Activated CD8-positive, alpha-beta T cell treated with anti-CD3 and anti-CD28 coated beads, Interleukin-2, amount 10 ng/mL, durations not matched to agents 7 days and 5 days (primary cell): ENCODE measurements at regions of chr12 and their contacts with region 1.

Region 1: DNA sequence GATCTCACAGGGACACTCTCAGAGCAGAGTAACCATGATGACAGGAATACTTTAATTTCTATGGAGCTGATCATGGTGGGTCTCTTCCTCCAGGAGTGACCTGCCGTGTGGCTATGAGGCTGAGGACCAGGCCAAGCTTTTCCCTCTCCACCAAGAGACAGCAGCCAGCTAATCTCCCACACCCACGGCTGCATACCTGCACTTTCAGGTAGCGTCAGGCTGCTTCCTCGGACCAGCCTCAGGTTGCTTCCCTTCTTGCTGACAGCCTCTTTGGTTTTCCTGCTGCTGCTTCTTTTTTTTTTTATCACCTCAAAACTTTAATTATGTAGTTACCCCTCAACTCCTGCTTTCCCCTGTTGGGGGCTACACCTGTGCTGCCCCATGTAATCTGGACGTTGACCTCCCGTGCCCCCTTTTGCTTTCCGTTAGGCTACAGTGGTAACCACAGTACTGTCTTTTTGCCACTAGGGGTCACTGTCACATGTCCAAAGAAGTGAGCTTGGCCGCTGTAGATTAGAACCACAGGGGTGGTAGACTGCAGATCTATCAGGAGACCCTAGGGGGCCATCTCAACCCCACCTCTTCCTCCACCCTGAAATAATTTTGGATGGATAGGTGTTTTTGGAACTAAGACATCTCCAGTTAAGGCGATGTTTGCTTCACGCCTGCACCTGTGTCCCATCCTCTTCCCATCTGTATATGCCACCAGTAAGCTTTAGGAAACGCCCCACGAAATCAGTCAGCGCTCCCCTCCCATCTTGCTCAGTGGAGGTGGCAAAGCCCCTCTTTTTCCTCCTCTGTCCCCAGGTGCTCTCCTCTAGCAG is 7.8 kb upstream of the PIP4K2C start:
- DNase-seq: peak; percentile 84
- ATAC-seq: peak; percentile 99
- H3K4me3 Mint-ChIP-seq: no peak overlapping the region
- H3K27ac Mint-ChIP-seq: no peak overlapping the region
- H3K4me1 Mint-ChIP-seq: peaks cover 6% of the 10 kb centered on the region
- H3K27me3 Mint-ChIP-seq: no peaks in the 10 kb centered on the region

Region 2: GRCh38 chr12:57552835-57553313 is 30.3 kb before region 1 on chr12:
- CTCF ChIA-PET with region 1: interaction called, 10 read pairs
- POLR2A ChIA-PET with region 1: no interaction called
- DNase-seq: no peak
- ATAC-seq: no peak
- H3K4me3 Mint-ChIP-seq: no peak overlapping the region
- H3K27ac Mint-ChIP-seq: no peak overlapping the region
- H3K4me1 Mint-ChIP-seq: peaks cover 18% of the 10 kb centered on the region
- H3K27me3 Mint-ChIP-seq: peaks cover 15% of the 10 kb centered on the region

Region 3: DNA sequence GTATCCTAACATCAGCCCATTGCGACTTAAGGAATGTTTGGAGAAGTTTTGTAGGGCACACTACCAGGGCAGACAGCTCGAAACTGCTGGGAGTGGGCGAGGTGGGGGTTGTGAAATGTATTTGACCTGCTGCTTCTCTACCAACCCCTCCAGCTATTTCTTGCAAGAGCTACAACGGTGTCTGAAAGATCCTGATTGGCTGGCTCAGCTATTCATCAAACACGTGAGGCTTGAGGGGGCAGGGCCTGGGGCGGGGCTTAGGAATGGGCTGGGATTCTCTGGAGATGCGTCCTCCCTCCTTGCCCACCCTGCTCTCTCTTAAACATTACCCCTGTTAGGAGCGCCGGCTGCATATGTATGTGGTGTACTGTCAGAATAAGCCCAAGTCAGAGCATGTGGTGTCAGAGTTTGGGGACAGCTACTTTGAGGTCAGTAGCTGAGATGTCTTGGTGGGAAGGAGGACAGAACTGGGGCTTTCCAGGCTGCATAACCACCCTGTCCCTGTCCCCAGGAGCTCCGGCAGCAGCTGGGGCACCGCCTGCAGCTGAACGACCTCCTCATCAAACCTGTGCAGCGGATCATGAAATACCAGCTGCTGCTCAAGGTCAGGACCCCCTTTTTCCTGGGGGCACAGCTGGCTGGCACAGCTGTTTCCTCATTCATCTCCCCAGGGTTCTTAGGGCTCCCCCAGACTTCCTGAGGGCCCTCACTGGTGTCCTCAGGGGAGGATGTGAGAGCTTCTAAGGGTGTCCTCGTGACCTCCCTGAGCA is 31.1 kb after region 1 on chr12:
- CTCF ChIA-PET with region 1: interaction called, 87 read pairs
- POLR2A ChIA-PET with region 1: no interaction called
- DNase-seq: no peak
- ATAC-seq: no peak
- H3K4me3 Mint-ChIP-seq: no peak overlapping the region
- H3K27ac Mint-ChIP-seq: no peak overlapping the region
- H3K4me1 Mint-ChIP-seq: peaks cover 15% of the 10 kb centered on the region
- H3K27me3 Mint-ChIP-seq: peaks cover 71% of the 10 kb centered on the region

Region 4: DNA sequence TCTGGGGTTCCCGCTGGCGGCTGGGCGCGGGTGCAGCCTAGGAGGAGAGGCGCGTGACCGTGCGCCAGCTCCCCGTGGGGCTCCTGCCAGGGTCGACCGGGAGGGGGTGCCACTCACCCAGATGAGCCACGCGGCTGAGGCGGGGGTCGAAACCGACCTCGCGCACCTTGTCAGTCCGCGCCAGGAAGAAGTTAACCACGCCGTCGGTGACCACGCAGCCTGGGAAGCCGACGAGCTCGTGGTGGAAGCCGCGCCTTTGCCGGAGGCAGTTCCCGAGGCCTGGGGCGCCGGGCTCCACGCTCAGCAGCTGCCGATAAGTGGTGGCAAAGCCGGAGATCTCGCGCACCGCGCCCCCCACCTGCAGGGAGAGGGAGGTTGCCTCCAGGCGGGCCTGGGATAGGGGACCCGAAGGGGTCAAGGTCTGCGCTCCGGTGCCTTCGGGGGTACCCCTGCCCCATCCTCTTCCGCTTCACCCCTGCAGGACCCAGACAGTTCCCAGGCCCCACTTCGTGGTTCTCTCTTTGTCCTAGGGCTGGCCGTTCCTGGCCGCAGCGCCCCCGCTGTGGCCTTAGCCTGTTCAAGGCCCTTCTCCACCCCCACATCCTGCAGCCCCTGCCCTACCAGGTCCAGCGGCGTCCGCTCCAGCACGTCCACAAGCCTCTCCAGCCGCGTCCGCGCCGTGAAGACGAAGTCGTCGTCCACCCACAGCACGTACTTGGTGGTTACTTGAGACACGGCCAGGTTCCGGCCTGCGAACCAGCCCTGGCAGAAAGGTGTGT is 44.5 kb after region 1 on chr12:
- CTCF ChIA-PET with region 1: interaction called, 87 read pairs
- POLR2A ChIA-PET with region 1: no interaction called
- DNase-seq: peak; percentile 45
- ATAC-seq: peak; percentile 56
- H3K4me3 Mint-ChIP-seq: no peak overlapping the region
- H3K27ac Mint-ChIP-seq: no peak overlapping the region
- H3K4me1 Mint-ChIP-seq: peaks cover 12% of the 10 kb centered on the region
- H3K27me3 Mint-ChIP-seq: peaks cover 86% of the 10 kb centered on the region

Region 5: GRCh38 chr12:57744777-57745484 is 161.7 kb after region 1 on chr12 and contains the start of gene TSPAN31:
- CTCF ChIA-PET with region 1: interaction called, 21 read pairs
- POLR2A ChIA-PET with region 1: interaction called, 4 read pairs
- DNase-seq: peak; percentile 98
- ATAC-seq: peak; percentile 80
- H3K4me3 Mint-ChIP-seq: peak within 1 kb of the TSS; percentile 92
- H3K27ac Mint-ChIP-seq: peak within 1 kb of the TSS; percentile 94
- H3K4me1 Mint-ChIP-seq: peaks cover 53% of the 10 kb centered on the region
- H3K27me3 Mint-ChIP-seq: no peaks in the 10 kb centered on the region
- total RNA-seq, gene TSPAN31: 12.9 to 13.3 TPM